Calu3 (cell line): ENCODE measurements at regions of chr16 and their contacts with region 1.

Region 1: DNA sequence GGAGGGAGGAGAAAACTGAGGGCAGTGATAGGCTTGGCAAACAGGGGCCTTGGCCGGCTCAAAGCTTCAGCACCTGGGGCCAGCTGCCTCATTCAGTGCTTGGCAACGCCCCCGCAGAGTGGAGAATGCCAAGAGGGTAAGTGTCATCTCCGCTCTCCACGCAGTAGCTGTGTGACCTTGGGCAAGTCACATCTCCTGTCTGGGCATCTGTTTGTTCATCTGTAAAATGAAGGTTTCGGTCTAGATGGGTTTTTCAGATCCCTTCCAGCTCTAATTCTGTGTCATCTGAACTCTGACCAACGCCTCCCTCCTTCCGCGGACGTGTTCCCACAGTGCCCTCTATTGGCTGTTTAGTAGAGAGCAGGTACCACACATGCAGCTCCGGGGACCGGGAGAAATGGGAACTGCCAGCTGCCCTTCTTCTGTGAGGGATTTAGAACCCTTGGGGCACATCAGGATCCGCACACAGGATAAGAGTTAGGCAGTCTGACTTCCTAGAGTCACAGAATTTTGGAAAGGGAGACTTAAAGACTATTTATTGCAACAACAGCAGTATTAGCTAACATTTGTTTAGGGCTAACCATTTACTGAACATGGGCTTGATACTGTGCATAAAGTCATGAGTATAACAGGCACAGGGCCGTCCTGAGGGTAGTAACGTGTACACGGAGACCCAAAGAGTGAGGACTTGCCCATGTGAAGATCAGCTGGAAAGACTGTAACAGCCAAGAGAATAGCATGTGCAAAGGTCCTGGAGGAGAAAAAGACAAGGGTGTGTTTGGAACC is 26.8 kb downstream of the GP2 start:
- DNase-seq: peak; percentile 63
- H3K4me3 Mint-ChIP-seq: no peak overlapping the region
- H3K27ac Mint-ChIP-seq: no peak overlapping the region
- H3K4me1 Mint-ChIP-seq: no peaks in the 10 kb centered on the region
- H3K27me3 Mint-ChIP-seq: peaks cover 65% of the 10 kb centered on the region
- CTCF ChIP-seq: peak; percentile 91

Region 2: DNA sequence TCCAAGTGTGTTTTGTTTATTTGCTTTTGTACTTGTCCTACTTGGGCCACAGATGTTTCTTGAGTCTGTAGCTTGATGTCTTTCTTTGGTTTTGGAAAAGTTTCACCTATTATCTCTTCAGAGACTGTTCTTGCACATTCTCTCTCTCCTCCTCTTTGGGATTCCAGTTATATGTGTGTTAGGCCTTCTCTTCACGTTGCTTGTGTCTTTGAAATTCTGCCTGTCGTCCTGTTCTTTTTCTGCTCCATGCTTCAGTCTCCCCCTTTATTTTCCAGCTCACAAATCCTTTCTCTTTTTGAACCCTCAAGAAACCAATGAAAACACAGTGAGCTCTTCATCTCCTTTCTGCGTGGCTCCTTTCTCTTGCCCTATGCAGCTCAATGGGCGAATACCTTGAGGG is 737.1 kb before region 1 on chr16:
- CTCF ChIA-PET with region 1: no interaction called
- intact Hi-C with region 1: loop called (anchors 10 kb)
- DNase-seq: no peak
- H3K4me3 Mint-ChIP-seq: no peak overlapping the region
- H3K27ac Mint-ChIP-seq: no peak overlapping the region
- H3K4me1 Mint-ChIP-seq: no peaks in the 10 kb centered on the region
- H3K27me3 Mint-ChIP-seq: no peaks in the 10 kb centered on the region
- CTCF ChIP-seq: no peak

Region 3: DNA sequence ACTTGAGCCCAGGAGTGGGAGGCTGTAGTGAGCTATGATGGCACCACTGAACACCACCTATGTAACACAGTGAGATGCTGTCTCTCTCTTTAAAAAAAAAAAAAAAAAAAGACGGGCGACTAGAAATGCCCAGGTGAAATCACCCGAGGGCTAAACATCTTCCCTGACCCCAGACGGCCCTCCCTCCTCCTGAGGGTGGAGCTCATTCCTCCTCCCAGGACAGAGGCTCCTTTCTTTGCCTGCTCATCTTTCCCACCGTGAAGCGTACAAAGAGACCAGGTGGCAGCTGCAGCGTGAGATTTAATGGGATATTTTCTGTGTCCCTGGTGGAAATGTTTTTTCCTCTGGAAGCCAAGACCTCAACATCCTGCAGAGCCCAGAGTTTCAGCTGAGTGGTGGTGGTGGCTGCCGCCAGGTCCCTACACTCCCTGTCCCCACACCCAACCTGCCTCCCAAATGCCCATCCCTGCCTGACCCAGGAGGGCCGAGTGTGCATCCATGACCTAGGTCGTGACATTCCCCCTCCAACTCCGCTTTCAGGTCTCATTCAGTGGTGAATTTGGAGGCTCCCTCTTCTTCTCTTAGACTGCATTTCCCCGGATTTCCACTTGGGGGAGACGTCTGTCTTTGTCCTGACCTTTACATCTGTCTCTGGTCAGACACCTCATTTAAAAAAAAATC is 401.4 kb before region 1 on chr16:
- CTCF ChIA-PET with region 1: interaction called, 18 read pairs
- intact Hi-C with region 1: no loop called
- DNase-seq: peak; percentile 75
- H3K4me3 Mint-ChIP-seq: no peak overlapping the region
- H3K27ac Mint-ChIP-seq: no peak overlapping the region
- H3K4me1 Mint-ChIP-seq: peaks cover 11% of the 10 kb centered on the region
- H3K27me3 Mint-ChIP-seq: peaks cover 65% of the 10 kb centered on the region
- CTCF ChIP-seq: peak; percentile 86

Region 4: DNA sequence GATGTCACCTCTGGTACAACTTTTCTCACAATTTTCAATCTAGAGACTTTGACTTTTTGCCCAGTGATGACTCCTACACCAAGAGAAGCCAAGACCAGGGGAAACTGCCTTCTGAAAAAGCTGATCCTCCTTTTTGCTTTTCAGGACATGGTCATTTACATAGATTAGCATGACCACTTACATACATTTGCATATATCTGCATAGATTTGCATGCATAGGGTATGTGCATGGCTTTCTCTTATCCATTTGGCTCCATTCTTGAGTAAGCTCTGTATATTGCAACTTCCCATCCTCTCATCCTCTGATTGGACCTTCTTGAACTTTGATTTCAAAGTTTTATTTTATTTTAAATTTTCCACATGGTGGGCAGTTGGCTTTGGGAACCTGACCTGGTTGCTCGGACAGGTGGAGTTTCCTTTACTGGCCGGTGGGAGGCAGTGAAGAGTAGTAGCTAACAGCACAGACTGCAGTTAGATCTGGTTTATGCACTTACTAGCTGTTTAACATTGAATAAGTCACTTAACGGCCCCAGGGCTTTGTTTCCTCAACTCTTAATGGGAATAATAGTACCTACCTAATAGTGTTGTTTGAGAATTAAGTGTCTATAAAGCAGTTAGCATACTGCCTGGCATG is 319.8 kb before region 1 on chr16:
- CTCF ChIA-PET with region 1: interaction called, 6 read pairs
- intact Hi-C with region 1: loop called (anchors 2 kb)
- DNase-seq: peak; percentile 10
- H3K4me3 Mint-ChIP-seq: no peak overlapping the region
- H3K27ac Mint-ChIP-seq: no peak overlapping the region
- H3K4me1 Mint-ChIP-seq: no peaks in the 10 kb centered on the region
- H3K27me3 Mint-ChIP-seq: peaks cover 81% of the 10 kb centered on the region
- CTCF ChIP-seq: no peak